ENCODE measurements at regions of chr17 and their contacts with region 1.

Region 1: DNA sequence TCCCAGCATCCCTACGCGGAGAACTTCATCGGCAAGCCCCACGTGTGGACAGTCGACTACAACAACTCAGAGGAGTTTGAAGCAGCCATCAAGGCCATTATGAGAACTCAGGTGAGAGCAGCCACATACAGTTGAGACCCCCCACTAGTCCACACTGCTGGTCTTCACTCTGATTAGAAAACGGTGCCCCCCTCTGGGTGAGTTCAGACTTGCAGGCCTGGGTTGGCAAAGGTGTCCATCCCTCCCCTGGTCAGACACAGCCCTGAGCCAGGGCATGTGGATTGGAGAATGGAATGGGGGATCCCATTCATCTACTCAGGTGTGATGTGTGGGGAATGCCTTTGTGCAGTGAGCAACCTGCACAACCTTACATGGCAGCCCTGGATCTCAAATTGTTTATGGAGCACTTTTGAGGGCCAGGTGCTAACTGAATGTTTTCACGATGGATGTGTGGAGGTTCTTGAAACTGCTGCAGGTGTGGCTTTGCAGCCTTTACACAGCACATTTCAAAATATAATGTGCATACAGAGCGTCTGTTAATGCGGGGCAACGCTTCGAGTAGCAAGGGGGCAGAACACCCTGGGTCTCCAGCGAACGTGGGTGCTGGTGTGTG is 72.6 kb downstream of the MGAT5B start:
- DNase-seq: peak; percentile 39 to 93
- H3K4me3 ChIP-seq: no peak overlapping the region
- H3K27ac ChIP-seq: no peak overlapping the region
- H3K4me1 ChIP-seq: peaks cover 0 to 18% (median 8%) of the 10 kb centered on the region in 4 experiments; a peak in 4 of 7 replicates
- H3K27me3 ChIP-seq: no peaks in the 10 kb centered on the region
- CTCF ChIP-seq: peak; percentile 73 to 79 (median 75)
- EP300 ChIP-seq: no peak
- POLR2A ChIP-seq: no peak
- RAD21 ChIP-seq: peak; percentile 80 to 86

Region 2: GRCh38 chr17:76841776-76842405 is 99.0 kb before region 1 on chr17:
- CTCF ChIA-PET with region 1: no interaction called
- POLR2A ChIA-PET with region 1: no interaction called
- DNase-seq: peak in 1 of 2 experiments; percentile 64
- H3K4me3 ChIP-seq: peak overlapping the region; percentile 31 to 62 (median 42); a peak in 6 of 8 replicates
- H3K27ac ChIP-seq: no peak overlapping the region
- H3K4me1 ChIP-seq: peaks cover 3 to 23% (median 10%) of the 10 kb centered on the region in 4 experiments
- H3K27me3 ChIP-seq: peaks cover 0 to 12% (median 10%) of the 10 kb centered on the region in 4 experiments; a peak in 5 of 7 replicates
- CTCF ChIP-seq: no peak
- EP300 ChIP-seq: no peak
- POLR2A ChIP-seq: no peak
- RAD21 ChIP-seq: no peak

Region 3: DNA sequence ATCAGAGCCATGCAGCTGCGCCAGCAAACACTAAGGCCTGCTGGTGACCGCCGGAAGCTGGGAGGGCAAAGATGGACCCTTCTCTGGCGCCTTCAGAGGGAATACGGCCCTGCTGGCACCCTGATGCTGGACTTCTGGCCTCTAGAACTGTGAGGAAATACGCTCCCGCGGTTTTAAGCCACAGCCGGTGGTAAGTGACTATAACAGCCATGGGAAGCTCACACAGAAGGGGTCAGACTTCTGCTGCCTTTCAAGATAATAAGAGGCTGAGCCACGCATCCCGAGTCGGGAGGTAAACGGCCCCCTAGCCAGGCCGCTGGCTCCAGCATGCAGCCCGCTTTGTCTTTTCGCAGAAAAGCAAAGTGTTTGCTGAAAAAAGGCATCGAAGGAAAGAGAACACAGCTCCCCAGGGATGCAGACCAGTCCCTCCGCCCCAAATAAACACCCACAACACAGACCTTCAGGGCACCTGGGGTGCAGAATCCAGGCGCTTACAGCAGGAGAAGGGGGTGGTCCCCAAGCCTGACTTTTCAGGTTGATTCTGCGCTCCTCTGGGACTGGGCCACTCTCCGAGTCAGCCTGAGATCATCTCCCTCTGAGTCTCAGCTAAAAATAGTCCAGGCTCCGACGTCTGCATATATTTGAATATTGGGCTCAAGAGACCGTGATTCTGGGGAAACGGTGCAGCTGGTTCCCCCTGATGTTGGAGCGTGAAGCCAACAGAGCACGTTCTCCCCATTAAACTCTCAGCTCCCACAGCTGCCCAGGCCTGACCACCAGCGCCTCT is 17.0 kb after region 1 on chr17:
- CTCF ChIA-PET with region 1: interaction called, 14 read pairs
- POLR2A ChIA-PET with region 1: no interaction called
- DNase-seq: no peak
- H3K4me3 ChIP-seq: no peak overlapping the region
- H3K27ac ChIP-seq: no peak overlapping the region
- H3K4me1 ChIP-seq: peaks cover 0 to 17% (median 11%) of the 10 kb centered on the region in 4 experiments; a peak in 6 of 7 replicates
- H3K27me3 ChIP-seq: no peaks in the 10 kb centered on the region
- CTCF ChIP-seq: no peak
- EP300 ChIP-seq: no peak
- POLR2A ChIP-seq: no peak
- RAD21 ChIP-seq: no peak